ENCODE measurements at regions of chr2 and their contacts with region 1.

Region 1: DNA sequence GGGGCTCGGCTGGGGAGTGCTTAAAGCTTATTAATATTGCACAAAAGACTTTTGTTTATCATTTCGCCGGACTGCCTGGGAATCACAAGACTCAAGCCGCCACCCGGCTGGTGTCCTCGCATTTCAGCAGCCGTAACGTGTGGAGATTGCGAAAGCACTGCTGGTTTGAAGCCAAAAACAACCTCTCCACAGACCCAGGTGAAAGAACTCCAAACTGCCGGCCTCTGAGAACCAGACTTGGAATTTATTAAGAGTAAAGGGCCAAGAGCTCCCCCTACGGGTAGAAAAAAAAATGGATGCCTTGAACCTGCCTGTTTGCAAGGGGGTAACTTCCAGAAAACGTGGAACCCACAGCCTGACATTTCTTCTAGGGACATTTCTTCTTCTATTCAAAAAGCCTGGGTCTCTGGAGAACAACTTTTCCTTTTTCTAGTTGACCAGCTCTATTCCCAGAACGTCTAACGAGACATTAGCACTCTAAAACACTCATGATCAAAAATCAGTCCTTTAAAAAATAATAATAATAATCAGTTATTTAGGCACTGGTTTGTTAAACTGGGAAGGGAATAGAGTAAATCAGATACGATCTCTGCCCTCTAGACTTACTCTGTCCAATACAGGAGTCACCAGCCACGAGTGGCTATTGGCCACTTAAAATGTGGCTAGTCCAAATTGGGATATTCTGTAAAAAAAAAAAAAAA is 216.3 kb downstream of the C1D start:
- H3K4me3 Mint-ChIP-seq: no peak overlapping the region
- H3K27ac Mint-ChIP-seq: no peak overlapping the region
- H3K4me1 Mint-ChIP-seq: no peaks in the 10 kb centered on the region
- H3K27me3 Mint-ChIP-seq: peaks cover 11% of the 10 kb centered on the region

Region 2: DNA sequence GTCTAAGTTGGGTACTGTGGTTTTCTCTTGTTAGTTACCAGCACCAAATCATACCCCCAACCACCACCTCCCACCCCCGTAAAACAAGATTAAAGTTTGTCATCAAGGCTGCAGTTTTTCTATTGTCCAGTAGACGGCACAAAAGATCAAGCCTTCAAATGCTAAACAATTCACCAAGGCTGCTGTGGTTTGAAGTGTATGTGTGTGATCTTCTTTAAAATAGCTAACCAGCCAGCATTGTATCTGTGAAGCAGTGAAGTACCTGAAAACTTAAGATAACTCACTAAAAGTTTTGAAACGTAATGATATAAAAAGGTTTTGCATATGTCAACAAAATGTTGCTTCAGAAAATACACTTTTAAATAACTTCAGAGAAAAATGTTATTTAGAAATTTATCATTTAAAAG is 1417.4 kb before region 1 on chr2:
- intact Hi-C with region 1: loop called (anchors 1 kb)
- H3K4me3 Mint-ChIP-seq: no peak overlapping the region
- H3K27ac Mint-ChIP-seq: no peak overlapping the region
- H3K4me1 Mint-ChIP-seq: peaks cover 39% of the 10 kb centered on the region
- H3K27me3 Mint-ChIP-seq: peaks cover 85% of the 10 kb centered on the region

Region 3: GRCh38 chr2:67898595-67898994 is 52.1 kb after region 1 on chr2:
- intact Hi-C with region 1: no loop called
- H3K4me3 Mint-ChIP-seq: no peak overlapping the region
- H3K27ac Mint-ChIP-seq: no peak overlapping the region
- H3K4me1 Mint-ChIP-seq: no peaks in the 10 kb centered on the region
- H3K27me3 Mint-ChIP-seq: no peaks in the 10 kb centered on the region